B cell (primary cell): ENCODE measurements at regions of chrX and their contacts with region 1.

Region 1: GRCh38 chrX:49163555-49164419 is 1.2 kb downstream of the MAGIX start:
- DNase-seq: peak; percentile 89
- ATAC-seq: peak; percentile 56
- H3K4me3 ChIP-seq: peak overlapping the region in 4 of 5 experiments; percentile 39 to 62 (median 46)
- H3K4me3 Mint-ChIP-seq: peak overlapping the region; percentile 86
- H3K27ac ChIP-seq: peak overlapping the region; percentile 79 to 82
- H3K27ac Mint-ChIP-seq: peak overlapping the region; percentile 96
- H3K4me1 ChIP-seq: peaks cover 5 to 38% of the 10 kb centered on the region in 2 donors
- H3K4me1 Mint-ChIP-seq: peaks cover 26% of the 10 kb centered on the region
- H3K27me3 ChIP-seq: no peaks in the 10 kb centered on the region
- H3K27me3 Mint-ChIP-seq: no peaks in the 10 kb centered on the region
- CTCF ChIP-seq: peak; percentile 67

Region 2: DNA sequence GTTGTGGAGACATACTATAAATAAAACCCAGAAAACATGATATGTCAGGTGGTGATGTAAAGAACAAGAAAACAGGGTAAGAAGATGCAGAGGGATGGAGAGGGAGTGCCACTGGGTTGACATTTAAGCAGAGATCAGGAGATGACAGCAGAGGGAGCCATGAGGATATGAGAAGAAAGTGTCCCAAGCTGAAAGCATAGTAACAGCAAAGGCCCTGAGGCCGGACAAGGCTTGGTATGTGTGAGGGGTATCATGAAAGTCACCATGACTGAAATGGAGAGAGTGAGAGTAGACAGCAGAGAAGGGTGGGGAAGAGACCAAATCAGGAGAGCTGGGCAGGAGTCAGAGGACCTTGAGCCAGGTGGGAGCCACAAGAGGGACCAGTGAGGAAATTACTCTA is 43.7 kb before region 1 on chrX:
- CTCF ChIA-PET with region 1: interaction called, 3 read pairs
- POLR2A ChIA-PET with region 1: interaction called, 3 read pairs
- intact Hi-C with region 1: loop called (anchors 5 kb)
- DNase-seq: no peak
- ATAC-seq: no peak
- H3K4me3 ChIP-seq: no peak overlapping the region
- H3K4me3 Mint-ChIP-seq: peak overlapping the region; percentile 0
- H3K27ac ChIP-seq: no peak overlapping the region
- H3K27ac Mint-ChIP-seq: no peak overlapping the region
- H3K4me1 ChIP-seq: peaks cover 4 to 18% of the 10 kb centered on the region in 2 donors
- H3K4me1 Mint-ChIP-seq: peaks cover 29% of the 10 kb centered on the region
- H3K27me3 ChIP-seq: no peaks in the 10 kb centered on the region
- H3K27me3 Mint-ChIP-seq: no peaks in the 10 kb centered on the region
- CTCF ChIP-seq: no peak

Region 3: DNA sequence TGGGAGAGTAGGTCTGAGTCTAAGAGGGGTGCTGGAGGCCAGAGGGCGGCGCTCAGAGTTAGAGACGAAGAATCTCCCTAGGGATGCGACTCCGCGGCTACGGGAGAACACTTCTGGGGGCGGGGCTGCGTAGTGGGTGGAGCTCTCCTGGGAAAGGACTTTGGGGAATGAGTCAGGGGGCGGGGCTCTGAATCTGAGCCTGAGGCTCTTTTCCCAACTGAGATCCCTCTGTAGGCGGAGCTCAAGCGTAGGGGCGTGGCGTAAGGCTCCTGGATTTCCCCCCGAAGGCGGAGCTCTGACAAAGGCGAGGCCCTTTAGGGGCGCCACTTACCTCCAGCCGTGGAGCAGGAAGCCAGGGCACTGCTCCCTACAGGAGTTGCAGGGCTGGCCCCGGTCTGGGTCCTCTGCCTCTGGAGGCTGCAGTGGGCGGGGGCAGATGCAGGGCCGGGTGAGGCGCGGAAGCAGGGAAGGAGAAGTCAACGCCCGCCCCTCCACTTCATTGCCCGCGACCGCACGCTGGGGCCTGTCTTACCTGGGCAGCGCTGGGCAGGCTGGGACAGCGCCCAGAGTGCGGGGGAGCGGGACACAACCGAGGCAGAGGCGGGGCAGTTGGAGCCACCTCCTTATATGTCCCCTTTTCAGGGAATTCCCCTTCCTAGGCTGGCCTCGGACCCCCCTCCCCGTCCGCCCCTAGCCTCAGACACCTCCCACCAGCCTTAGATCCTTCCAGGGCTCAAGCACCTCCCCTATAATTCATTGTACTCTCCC is 20.7 kb after region 1 on chrX:
- CTCF ChIA-PET with region 1: interaction called, 6 read pairs
- POLR2A ChIA-PET with region 1: no interaction called
- intact Hi-C with region 1: loop called (anchors 1 kb)
- DNase-seq: peak; percentile 53
- ATAC-seq: peak; percentile 55
- H3K4me3 ChIP-seq: peak overlapping the region in 4 of 5 experiments; percentile 58 to 71 (median 70)
- H3K4me3 Mint-ChIP-seq: peak overlapping the region; percentile 83
- H3K27ac ChIP-seq: peak overlapping the region; percentile 21 to 24
- H3K27ac Mint-ChIP-seq: peak overlapping the region; percentile 77
- H3K4me1 ChIP-seq: peaks cover 6 to 19% of the 10 kb centered on the region in 2 donors
- H3K4me1 Mint-ChIP-seq: peaks cover 11% of the 10 kb centered on the region
- H3K27me3 ChIP-seq: no peaks in the 10 kb centered on the region
- H3K27me3 Mint-ChIP-seq: no peaks in the 10 kb centered on the region
- CTCF ChIP-seq: no peak